ENCODE measurements at regions of chr20 and their contacts with region 1.

Region 1: GRCh38 chr20:62237801-62238571 is at the start of gene OSBPL2:
- DNase-seq: peak; percentile 100
- ATAC-seq: peak; percentile 98
- H3K4me3 ChIP-seq: peak within 1 kb of the TSS; percentile 46 to 74 (median 60)
- H3K4me3 Mint-ChIP-seq: peak within 1 kb of the TSS; percentile 90
- H3K27ac ChIP-seq: peak within 1 kb of the TSS; percentile 43 to 83
- H3K27ac Mint-ChIP-seq: peak within 1 kb of the TSS; percentile 96
- H3K4me1 ChIP-seq: peaks cover 17 to 22% of the 10 kb centered on the region in 2 donors
- H3K4me1 Mint-ChIP-seq: peaks cover 30% of the 10 kb centered on the region
- H3K27me3 ChIP-seq: peaks cover 0 to 17% (median 1%) of the 10 kb centered on the region in 4 experiments
- H3K27me3 Mint-ChIP-seq: peaks cover 7% of the 10 kb centered on the region
- CTCF ChIP-seq: no peak
- total RNA-seq, gene OSBPL2: 74.3 and 76.6 TPM in 2 replicates

Region 2: DNA sequence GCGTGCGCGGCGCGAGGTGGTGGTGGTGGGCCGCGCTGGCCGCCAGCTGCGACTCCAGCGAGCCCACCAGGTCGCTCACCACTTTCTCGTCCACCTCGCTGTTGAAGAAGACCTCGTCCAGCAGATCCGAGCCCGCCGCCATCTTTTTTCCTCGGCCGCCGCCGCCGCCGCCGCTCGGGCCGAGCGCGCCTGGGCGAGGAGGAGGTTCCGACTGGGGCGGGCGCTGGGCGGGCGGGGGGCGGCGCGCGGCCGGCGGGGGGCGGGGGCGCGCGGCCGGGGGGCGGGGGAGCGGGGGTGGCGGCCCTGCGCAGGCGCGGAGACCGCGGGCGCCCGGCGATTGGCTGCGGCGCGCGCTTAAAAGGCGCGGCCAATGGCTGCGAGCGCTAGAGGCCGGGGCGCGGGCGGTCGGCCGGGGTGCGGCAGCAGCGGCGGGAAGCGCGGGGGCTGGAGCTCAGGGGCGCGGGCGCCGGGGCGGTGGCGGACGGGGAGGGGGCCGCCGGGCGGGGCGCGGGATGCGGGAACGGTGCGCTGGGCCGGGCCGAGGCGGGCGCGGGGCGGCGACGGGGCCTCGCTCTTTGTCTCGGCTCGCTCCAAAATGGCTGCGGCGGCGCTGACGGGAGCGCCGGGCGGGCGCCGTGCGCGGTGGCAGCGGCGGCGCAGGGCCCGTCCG is 172.2 kb before region 1 on chr20 and contains the start of gene TAF4:
- CTCF ChIA-PET with region 1: no interaction called
- POLR2A ChIA-PET with region 1: no interaction called
- intact Hi-C with region 1: loop called (anchors 1 kb)
- DNase-seq: peak; percentile 87
- ATAC-seq: peak; percentile 76
- H3K4me3 ChIP-seq: peak within 1 kb of the TSS; percentile 42 to 88 (median 75)
- H3K4me3 Mint-ChIP-seq: peak within 1 kb of the TSS; percentile 93
- H3K27ac ChIP-seq: peak within 1 kb of the TSS; percentile 8 to 72
- H3K27ac Mint-ChIP-seq: peak within 1 kb of the TSS; percentile 92
- H3K4me1 ChIP-seq: peaks cover 31 to 33% of the 10 kb centered on the region in 2 donors
- H3K4me1 Mint-ChIP-seq: peaks cover 45% of the 10 kb centered on the region
- H3K27me3 ChIP-seq: peaks cover 0 to 8% (median 0%) of the 10 kb centered on the region in 4 experiments
- H3K27me3 Mint-ChIP-seq: no peaks in the 10 kb centered on the region
- CTCF ChIP-seq: no peak
- total RNA-seq, gene TAF4: 36.9 and 39.5 TPM in 2 replicates

Region 3: DNA sequence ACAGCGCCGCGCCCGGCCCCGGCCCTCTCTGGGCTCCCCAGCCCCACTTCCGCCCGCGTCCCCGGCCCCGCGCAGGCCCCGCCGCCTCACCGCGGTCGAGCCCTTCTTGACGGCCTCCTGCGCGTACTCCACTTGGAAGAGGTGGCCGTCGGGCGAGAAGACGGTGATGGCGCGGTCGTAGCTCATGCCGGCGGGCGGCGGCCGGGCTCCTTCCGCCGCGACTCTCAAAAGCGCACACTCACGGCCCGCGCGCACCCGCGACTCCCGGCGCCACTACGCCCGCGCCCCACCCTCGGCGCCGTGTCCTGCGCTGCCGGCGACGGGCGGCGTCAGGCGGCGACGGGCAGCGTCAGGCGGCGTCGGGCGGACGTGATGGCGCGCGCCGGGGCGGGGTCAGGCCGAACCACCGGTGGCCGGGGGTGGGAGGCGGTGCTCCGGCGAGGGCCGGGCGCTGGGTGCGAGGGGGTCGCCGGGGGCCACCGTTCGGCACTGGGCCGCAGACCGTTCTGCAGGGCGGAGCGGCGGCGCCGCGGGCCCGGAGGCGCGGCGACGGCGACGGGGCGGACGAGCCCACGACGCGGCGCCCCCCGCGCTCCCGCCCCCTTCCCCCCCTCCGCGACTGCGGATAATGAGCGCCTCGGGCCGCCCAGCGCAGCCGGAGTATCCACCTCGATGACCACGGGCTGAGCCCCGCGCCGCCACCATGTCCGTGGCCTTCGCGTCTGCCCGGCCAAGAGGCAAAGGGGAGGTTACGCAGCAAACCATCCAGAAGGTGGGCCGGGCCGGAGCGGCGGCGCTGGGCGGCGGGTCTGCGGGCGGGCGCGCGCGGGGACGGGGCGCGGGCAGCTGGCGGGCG is 94.6 kb before region 1 on chr20 and contains the starts of genes PSMA7 and SS18L1:
- CTCF ChIA-PET with region 1: no interaction called
- POLR2A ChIA-PET with region 1: no interaction called
- intact Hi-C with region 1: loop called (anchors 1 kb)
- DNase-seq: peak; percentile 94
- ATAC-seq: peak; percentile 90
- H3K4me3 ChIP-seq: peak within 1 kb of the TSS; percentile 54 to 88 (median 63)
- H3K4me3 Mint-ChIP-seq: peak within 1 kb of the TSS; percentile 91
- H3K27ac ChIP-seq: peak within 1 kb of the TSS; percentile 63 to 75
- H3K27ac Mint-ChIP-seq: peak within 1 kb of the TSS; percentile 92
- H3K4me1 ChIP-seq: peaks cover 24 to 29% of the 10 kb centered on the region in 2 donors
- H3K4me1 Mint-ChIP-seq: peaks cover 40% of the 10 kb centered on the region
- H3K27me3 ChIP-seq: no peaks in the 10 kb centered on the region
- H3K27me3 Mint-ChIP-seq: no peaks in the 10 kb centered on the region
- CTCF ChIP-seq: no peak
- total RNA-seq, gene PSMA7: 140 TPM in 2 replicates
- total RNA-seq, gene SS18L1: 20.7 and 22.0 TPM in 2 replicates

Region 4: DNA sequence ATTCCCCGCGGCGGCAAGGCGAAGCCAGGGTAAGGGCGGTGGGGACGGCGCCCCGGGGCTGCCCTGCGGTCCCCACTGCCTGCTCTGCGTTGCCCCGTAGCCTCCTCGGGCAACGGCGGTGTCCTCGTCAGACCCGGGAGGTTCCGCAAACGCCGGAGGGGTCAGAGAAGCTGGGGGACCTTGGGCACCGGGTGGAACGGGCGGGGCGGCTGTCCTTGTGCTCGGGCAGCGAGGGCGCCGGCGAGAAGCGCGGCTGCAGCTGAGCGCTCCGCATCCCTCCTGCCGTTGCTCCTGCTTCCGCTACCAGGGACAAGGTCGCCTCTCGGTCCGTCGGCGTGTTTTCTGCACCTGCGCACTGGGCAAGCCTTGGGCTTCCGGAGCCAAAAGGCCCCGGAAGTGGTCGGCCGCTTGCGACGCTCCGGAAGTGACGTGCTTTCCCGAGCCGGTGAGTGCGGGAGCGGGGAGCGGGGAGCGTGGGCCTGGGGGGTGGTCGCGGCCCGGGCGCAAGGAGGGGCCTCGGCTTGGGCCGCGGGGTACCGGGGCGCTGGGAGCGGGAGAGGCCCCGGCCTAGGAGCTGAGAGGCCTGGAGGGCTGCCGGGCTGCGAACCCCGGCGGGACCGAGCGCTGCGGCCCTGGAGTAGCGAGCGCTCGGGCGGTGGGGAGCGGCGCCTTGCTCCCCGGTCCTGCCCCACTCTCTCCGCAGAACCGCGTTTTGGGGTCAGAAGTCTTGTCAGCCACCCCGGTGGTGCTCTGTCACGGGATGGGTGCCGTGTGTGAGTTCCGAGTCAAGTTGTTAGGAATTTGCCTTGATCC is 55.2 kb before region 1 on chr20 and contains the start of gene MTG2:
- CTCF ChIA-PET with region 1: no interaction called
- POLR2A ChIA-PET with region 1: no interaction called
- intact Hi-C with region 1: loop called (anchors 1 kb)
- DNase-seq: peak; percentile 96
- ATAC-seq: peak; percentile 90
- H3K4me3 ChIP-seq: peak within 1 kb of the TSS; percentile 81 to 88 (median 84)
- H3K4me3 Mint-ChIP-seq: peak within 1 kb of the TSS; percentile 97
- H3K27ac ChIP-seq: peak within 1 kb of the TSS; percentile 86 to 97
- H3K27ac Mint-ChIP-seq: peak within 1 kb of the TSS; percentile 98
- H3K4me1 ChIP-seq: peaks cover 13 to 18% of the 10 kb centered on the region in 2 donors
- H3K4me1 Mint-ChIP-seq: peaks cover 39% of the 10 kb centered on the region
- H3K27me3 ChIP-seq: no peaks in the 10 kb centered on the region
- H3K27me3 Mint-ChIP-seq: no peaks in the 10 kb centered on the region
- CTCF ChIP-seq: no peak
- total RNA-seq, gene MTG2: 47.6 and 48.4 TPM in 2 replicates

Region 5: GRCh38 chr20:62201173-62202082 is 36.6 kb before region 1 on chr20:
- CTCF ChIA-PET with region 1: no interaction called
- POLR2A ChIA-PET with region 1: no interaction called
- intact Hi-C with region 1: loop called (anchors 1 kb)
- DNase-seq: peak; percentile 49
- ATAC-seq: peak; percentile 88
- H3K4me3 ChIP-seq: peak overlapping the region in 2 of 5 experiments; percentile 21 to 35
- H3K4me3 Mint-ChIP-seq: peak overlapping the region; percentile 80
- H3K27ac ChIP-seq: peak overlapping the region in 1 of 2 donors; percentile 18
- H3K27ac Mint-ChIP-seq: peak overlapping the region; percentile 83
- H3K4me1 ChIP-seq: peaks cover 24 to 28% of the 10 kb centered on the region in 2 donors
- H3K4me1 Mint-ChIP-seq: peaks cover 32% of the 10 kb centered on the region
- H3K27me3 ChIP-seq: no peaks in the 10 kb centered on the region
- H3K27me3 Mint-ChIP-seq: no peaks in the 10 kb centered on the region
- CTCF ChIP-seq: no peak

Region 6: DNA sequence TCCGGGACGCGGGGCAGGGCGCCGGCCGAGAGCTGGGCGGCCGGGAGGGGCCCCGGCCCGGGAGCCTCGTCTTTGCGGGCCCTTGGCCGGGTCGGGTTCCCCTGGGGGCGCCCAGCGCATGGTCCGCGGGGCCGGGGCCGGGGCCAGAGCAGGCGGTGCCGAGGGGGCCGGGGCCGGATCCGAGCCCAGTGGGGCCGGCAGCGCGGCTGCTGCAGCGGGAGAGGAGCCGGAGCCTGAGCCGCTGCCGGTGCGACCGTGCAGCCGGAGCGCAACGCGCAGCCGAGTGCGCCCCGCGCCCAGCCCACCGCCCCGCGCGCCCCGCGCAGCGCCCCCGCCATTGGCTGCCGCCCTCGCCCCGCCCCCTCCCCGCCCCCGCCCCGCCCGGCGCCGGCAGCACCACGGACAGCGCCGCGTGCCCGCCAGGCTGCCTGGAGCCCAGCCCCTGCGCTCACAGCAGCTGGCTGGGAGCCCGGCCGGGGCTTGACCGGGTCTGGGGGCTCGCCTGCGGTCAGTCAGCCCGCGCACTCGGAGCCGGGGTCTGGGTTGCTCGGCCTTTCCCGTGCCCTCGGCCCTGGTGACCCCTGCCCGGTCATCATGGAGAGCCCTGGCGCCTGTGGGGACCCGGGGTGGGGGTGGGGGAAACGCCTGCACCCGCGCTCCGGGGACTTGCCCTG is 17.9 kb before region 1 on chr20 and contains the start of gene HRH3:
- CTCF ChIA-PET with region 1: no interaction called
- POLR2A ChIA-PET with region 1: no interaction called
- intact Hi-C with region 1: loop called (anchors 1 kb)
- DNase-seq: peak; percentile 61
- ATAC-seq: peak; percentile 87
- H3K4me3 ChIP-seq: no peak within 1 kb of the TSS
- H3K4me3 Mint-ChIP-seq: peak within 1 kb of the TSS; percentile 49
- H3K27ac ChIP-seq: no peak within 1 kb of the TSS
- H3K27ac Mint-ChIP-seq: no peak within 1 kb of the TSS
- H3K4me1 ChIP-seq: peaks cover 12 to 17% of the 10 kb centered on the region in 2 donors
- H3K4me1 Mint-ChIP-seq: peaks cover 2% of the 10 kb centered on the region
- H3K27me3 ChIP-seq: peaks cover 0 to 81% (median 33%) of the 10 kb centered on the region in 4 experiments
- H3K27me3 Mint-ChIP-seq: peaks cover 33% of the 10 kb centered on the region
- CTCF ChIP-seq: no peak
- total RNA-seq, gene HRH3: not detected in 2 replicates

Region 7: GRCh38 chr20:62407221-62407992 is 169.4 kb after region 1 on chr20 and contains the start of gene CABLES2:
- CTCF ChIA-PET with region 1: no interaction called
- POLR2A ChIA-PET with region 1: no interaction called
- intact Hi-C with region 1: loop called (anchors 2 kb)
- DNase-seq: peak; percentile 95
- ATAC-seq: peak; percentile 90
- H3K4me3 ChIP-seq: peak within 1 kb of the TSS; percentile 36 to 71 (median 67)
- H3K4me3 Mint-ChIP-seq: peak within 1 kb of the TSS; percentile 90
- H3K27ac ChIP-seq: peak within 1 kb of the TSS; percentile 59 to 66
- H3K27ac Mint-ChIP-seq: peak within 1 kb of the TSS; percentile 87
- H3K4me1 ChIP-seq: peaks cover 30 to 41% of the 10 kb centered on the region in 2 donors
- H3K4me1 Mint-ChIP-seq: peaks cover 30% of the 10 kb centered on the region
- H3K27me3 ChIP-seq: no peaks in the 10 kb centered on the region
- H3K27me3 Mint-ChIP-seq: no peaks in the 10 kb centered on the region
- CTCF ChIP-seq: no peak
- total RNA-seq, gene CABLES2: 8.2 and 8.6 TPM in 2 replicates